MCF 10A (cell line): ENCODE measurements at regions of chr4 and their contacts with region 1.

Region 1: GRCh38 chr4:184815046-184815877 is 10.5 kb downstream of the ACSL1 start:
- DNase-seq: peak; percentile 96
- H3K4me3 Mint-ChIP-seq: peak overlapping the region; percentile 87
- H3K27ac Mint-ChIP-seq: peak overlapping the region; percentile 95
- H3K4me1 Mint-ChIP-seq: peaks cover 76% of the 10 kb centered on the region
- H3K27me3 Mint-ChIP-seq: no peaks in the 10 kb centered on the region
- CTCF ChIP-seq: no peak

Region 2: GRCh38 chr4:184695178-184695896 is 119.9 kb before region 1 on chr4:
- CTCF ChIA-PET with region 1: no interaction called
- POLR2A ChIA-PET with region 1: interaction called, 15 read pairs
- intact Hi-C with region 1: no loop called
- DNase-seq: peak; percentile 26
- H3K4me3 Mint-ChIP-seq: no peak overlapping the region
- H3K27ac Mint-ChIP-seq: peak overlapping the region; percentile 61
- H3K4me1 Mint-ChIP-seq: peaks cover 10% of the 10 kb centered on the region
- H3K27me3 Mint-ChIP-seq: no peaks in the 10 kb centered on the region
- CTCF ChIP-seq: no peak

Region 3: GRCh38 chr4:184745831-184746795 is 69.1 kb before region 1 on chr4:
- CTCF ChIA-PET with region 1: interaction called, 5 read pairs
- POLR2A ChIA-PET with region 1: interaction called, 12 read pairs
- intact Hi-C with region 1: no loop called
- DNase-seq: peak; percentile 76
- H3K4me3 Mint-ChIP-seq: peak overlapping the region; percentile 38
- H3K27ac Mint-ChIP-seq: peak overlapping the region; percentile 84
- H3K4me1 Mint-ChIP-seq: peaks cover 26% of the 10 kb centered on the region
- H3K27me3 Mint-ChIP-seq: no peaks in the 10 kb centered on the region
- CTCF ChIP-seq: peak; percentile 57

Region 4: DNA sequence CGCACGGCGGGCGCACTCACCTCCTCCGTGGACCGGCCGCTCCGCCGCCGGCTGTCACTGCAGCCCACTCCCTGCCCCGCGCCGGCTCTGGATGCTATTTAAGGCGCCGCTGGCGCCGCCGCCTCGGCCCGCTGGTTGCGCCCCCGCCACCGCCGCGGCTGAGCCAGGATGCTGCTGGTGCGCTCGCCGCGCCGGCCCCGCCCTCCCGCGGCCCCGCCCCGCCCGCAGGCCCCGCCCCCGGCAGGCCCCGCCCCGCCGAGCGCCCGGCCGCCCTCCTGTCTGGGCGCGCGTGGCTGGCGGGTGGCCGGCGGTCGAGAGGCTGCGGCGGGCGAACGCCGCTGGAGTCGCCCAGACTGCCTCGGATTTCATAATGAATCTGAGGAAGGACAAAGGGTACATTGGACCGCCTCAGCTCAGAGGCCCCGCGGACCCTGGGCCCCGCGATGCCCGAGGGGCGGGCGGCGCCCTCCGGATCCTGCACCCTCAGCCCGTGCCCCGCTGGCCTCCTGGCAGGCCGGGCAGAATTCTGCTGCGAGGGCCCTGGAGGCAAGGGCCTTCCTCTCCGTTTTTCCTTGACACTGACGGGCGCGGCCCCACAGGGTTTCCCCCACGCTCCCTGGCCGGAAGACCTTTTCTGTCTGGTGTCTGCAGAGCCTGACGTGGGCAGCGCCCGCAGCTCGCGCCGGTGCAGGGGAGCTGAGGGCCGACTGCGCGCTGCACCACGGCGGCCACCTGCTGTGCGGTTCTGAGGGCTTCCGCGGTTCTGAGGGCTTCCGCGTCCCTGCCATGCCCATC is 10.8 kb after region 1 on chr4 and contains the start of gene ACSL1:
- CTCF ChIA-PET with region 1: interaction called, 5 read pairs
- POLR2A ChIA-PET with region 1: interaction called, 62 read pairs
- intact Hi-C with region 1: loop called (anchors 1 kb)
- DNase-seq: peak; percentile 65
- H3K4me3 Mint-ChIP-seq: peak within 1 kb of the TSS; percentile 87
- H3K27ac Mint-ChIP-seq: peak within 1 kb of the TSS; percentile 50
- H3K4me1 Mint-ChIP-seq: peaks cover 23% of the 10 kb centered on the region
- H3K27me3 Mint-ChIP-seq: no peaks in the 10 kb centered on the region
- CTCF ChIP-seq: no peak
- total RNA-seq, gene ACSL1: 99.5 and 105 TPM in 2 replicates

Region 5: GRCh38 chr4:184896868-184897715 is 81.8 kb after region 1 on chr4:
- CTCF ChIA-PET with region 1: interaction called, 5 read pairs
- POLR2A ChIA-PET with region 1: interaction called, 32 read pairs
- intact Hi-C with region 1: loop called (anchors 2 kb)
- DNase-seq: peak; percentile 86
- H3K4me3 Mint-ChIP-seq: no peak overlapping the region
- H3K27ac Mint-ChIP-seq: peak overlapping the region; percentile 82
- H3K4me1 Mint-ChIP-seq: peaks cover 45% of the 10 kb centered on the region
- H3K27me3 Mint-ChIP-seq: no peaks in the 10 kb centered on the region
- CTCF ChIP-seq: no peak

Region 6: DNA sequence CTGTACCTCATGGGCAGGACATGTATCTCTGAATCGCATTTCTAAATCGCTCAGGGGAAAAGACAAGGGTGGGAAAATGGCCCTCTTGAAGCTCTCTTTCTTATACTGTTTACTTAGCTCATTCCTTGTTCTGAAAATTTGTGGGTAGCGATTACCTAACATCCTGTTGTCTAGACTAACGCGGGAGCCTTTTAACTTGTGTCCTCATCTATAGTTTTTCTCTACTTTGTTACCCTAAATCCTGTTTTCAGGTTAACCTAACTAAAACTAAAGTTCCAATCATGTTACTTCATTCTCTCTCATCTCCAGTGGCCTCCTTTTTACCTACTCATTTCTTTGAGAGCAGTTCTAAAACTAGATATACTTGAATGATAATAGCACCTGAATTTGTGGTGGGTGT is 439.2 kb after region 1 on chr4:
- CTCF ChIA-PET with region 1: no interaction called
- POLR2A ChIA-PET with region 1: no interaction called
- intact Hi-C with region 1: no loop called
- DNase-seq: peak; percentile 36
- H3K4me3 Mint-ChIP-seq: no peak overlapping the region
- H3K27ac Mint-ChIP-seq: no peak overlapping the region
- H3K4me1 Mint-ChIP-seq: peaks cover 26% of the 10 kb centered on the region
- H3K27me3 Mint-ChIP-seq: no peaks in the 10 kb centered on the region
- CTCF ChIP-seq: no peak